ENCODE measurements at regions of chr11 and their contacts with region 1.

Region 1: DNA sequence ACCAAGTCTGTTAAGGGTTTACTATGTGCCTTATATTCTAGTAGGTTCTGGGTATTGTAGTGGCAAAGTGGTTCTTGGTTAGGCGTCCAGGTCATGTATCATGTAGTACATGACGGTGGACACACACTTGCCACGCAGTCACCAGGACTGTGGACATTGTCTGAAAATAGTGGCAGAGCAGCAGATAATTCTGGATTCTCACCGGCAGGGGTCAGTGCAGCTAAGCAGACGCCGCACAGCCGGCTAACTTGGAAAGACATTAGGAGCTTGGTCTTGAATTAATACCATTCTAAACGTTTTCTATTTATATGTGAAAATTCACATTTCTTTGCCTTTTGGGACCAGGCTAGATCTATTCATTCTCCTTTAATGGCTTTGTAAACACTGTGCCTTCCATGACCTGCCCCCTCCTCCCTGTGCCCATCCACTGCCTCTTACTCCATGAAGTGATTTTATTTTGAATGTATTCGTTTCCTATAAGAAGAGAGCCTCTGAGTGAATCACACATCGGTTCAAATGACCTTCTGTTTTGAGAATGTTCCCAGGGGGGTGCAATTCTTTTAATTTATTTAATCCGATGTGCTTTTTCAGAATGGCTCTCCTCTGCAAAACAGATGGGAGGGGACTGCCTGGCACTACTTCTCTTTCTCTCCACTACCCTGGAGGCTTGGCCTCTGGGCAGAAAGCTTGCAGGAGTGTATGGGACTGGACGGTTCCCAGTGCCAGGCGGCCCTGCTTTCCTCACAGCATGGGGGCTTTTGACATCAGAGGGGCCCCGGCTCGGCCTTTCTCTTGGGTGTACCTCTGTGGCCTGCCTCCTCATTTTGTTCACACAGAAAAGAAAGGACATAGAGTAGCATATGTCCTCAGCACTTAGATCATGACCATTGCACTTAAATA is 378.0 kb downstream of the NTM start:
- DNase-seq: peak; percentile 62
- CTCF ChIP-seq: peak; percentile 76

Region 2: GRCh38 chr11:131737357-131737756 is 11.0 kb before region 1 on chr11:
- CTCF ChIA-PET with region 1: interaction called, 23 read pairs
- POLR2A ChIA-PET with region 1: no interaction called
- DNase-seq: no peak
- CTCF ChIP-seq: no peak

Region 3: GRCh38 chr11:131760091-131761061 is 12.0 kb after region 1 on chr11:
- CTCF ChIA-PET with region 1: interaction called, 35 read pairs
- POLR2A ChIA-PET with region 1: no interaction called
- DNase-seq: no peak
- CTCF ChIP-seq: no peak

Region 4: GRCh38 chr11:131770801-131771200 is 22.4 kb after region 1 on chr11:
- CTCF ChIA-PET with region 1: interaction called, 12 read pairs
- POLR2A ChIA-PET with region 1: no interaction called
- DNase-seq: no peak
- CTCF ChIP-seq: no peak

Region 5: GRCh38 chr11:131785801-131786200 is 37.4 kb after region 1 on chr11:
- CTCF ChIA-PET with region 1: no interaction called
- POLR2A ChIA-PET with region 1: no interaction called
- DNase-seq: no peak
- CTCF ChIP-seq: no peak

Region 6: GRCh38 chr11:131867457-131868257 is 119.3 kb after region 1 on chr11:
- CTCF ChIA-PET with region 1: no interaction called
- POLR2A ChIA-PET with region 1: no interaction called
- DNase-seq: peak; percentile 76
- CTCF ChIP-seq: peak; percentile 74

Region 7: GRCh38 chr11:132126973-132127899 is 378.8 kb after region 1 on chr11:
- CTCF ChIA-PET with region 1: interaction called, 17 read pairs
- POLR2A ChIA-PET with region 1: no interaction called
- DNase-seq: peak; percentile 41
- CTCF ChIP-seq: peak; percentile 4

Region 8: DNA sequence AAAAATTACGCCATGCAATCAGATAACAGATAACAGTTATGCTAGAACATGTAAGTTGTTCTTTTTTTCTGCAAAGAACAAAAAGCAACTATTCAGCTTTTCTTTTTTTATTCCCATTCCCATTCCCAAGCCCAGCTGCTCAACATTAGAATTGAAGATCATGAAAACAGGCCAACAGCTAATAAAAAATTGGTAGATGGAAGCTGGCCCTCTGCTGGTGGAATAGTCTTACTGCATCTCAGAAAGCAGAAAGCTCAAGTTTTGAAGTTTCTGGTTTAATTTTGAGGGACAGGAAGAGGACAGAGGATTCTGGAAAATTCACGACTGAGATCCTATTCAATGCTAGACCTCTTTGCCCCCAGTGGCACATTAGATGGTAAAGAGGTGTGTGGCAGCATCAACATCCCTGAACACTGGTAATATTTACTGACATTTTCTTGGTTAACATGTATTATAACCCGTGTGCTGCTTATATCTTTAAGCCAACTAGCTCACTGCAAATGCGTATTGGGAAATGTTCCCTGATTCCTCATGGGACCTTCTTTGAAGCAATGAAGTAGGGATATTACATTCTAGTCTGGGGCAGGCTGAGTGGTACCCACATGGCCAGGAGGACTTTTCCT is 1192.7 kb after region 1 on chr11:
- CTCF ChIA-PET with region 1: interaction called, 22 read pairs
- POLR2A ChIA-PET with region 1: no interaction called
- DNase-seq: no peak
- CTCF ChIP-seq: peak; percentile 73